PC-3 (cell line): ENCODE measurements at regions of chr3 and their contacts with region 1.

Region 1: DNA sequence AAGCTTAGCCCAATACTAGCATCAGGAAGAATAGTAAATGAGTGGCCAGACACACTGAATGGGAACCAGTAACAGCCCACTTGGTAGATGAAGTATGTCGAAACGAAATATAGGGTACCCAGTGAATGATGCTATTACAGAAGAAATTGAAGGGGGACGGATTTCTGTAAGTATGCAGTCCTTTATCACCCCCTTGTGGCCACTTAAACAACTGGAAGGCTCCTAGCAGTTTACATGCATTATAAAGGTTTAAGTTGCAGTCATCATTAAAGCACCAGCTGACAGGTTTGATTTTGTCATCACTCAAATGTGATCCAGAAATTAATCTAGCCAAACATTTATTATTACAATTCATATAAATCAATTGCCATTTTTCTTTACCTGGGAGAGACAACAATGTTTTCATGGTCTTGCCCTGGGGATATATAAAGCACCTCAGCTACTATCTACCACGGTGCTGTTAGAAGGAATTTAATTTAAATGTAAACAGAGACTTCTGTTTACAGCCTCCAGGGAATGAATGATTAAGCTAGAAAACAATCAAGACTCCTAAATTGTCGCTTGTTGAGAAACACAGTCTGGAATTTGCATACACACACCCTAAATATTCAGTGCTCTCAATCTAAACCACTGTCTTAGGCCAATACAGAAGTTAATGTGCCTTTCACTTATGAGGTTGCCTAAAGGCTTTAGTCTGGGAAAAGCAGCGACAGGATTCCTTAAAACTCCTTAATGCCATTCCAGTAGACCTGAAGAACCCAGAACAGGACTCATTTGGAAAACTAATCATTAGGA is 7.8 kb downstream of the EIF1B start:
- DNase-seq: peak; percentile 77
- ATAC-seq: peak; percentile 85
- H3K4me3 ChIP-seq: no peak overlapping the region
- H3K27ac ChIP-seq: no peak overlapping the region
- H3K4me1 ChIP-seq: no peaks in the 10 kb centered on the region
- H3K27me3 ChIP-seq: no peaks in the 10 kb centered on the region
- CTCF ChIP-seq: peak; percentile 89

Region 2: DNA sequence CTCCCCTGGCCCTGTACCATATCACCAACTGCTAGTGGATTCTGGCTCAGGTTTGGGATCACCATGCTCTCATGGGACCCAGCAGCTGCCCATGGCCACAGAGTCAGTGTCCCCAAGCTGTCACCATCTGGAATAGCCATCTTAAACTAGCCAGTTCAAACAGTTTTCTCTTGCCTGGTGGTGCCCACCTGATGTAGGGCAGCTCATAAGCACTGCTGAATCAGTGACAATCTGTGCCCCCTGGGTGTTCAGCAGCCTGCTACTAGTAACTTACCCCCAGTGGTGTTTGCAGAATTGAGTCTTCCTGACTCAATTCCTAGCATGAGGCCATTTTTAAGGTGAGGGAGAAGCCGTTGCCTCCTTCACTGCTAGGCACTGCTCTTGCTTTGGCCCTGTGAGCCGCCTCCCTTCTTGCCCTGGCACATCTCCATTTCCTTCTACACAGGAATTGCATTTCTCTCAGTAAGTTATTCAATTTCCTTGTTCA is 902.8 kb before region 1 on chr3:
- CTCF ChIA-PET with region 1: no interaction called
- POLR2A ChIA-PET with region 1: no interaction called
- intact Hi-C with region 1: loop called (anchors 10 kb)
- DNase-seq: no peak
- ATAC-seq: peak; percentile 16
- H3K4me3 ChIP-seq: no peak overlapping the region
- H3K27ac ChIP-seq: no peak overlapping the region
- H3K4me1 ChIP-seq: peaks cover 5% of the 10 kb centered on the region
- H3K27me3 ChIP-seq: no peaks in the 10 kb centered on the region
- CTCF ChIP-seq: no peak

Region 3: DNA sequence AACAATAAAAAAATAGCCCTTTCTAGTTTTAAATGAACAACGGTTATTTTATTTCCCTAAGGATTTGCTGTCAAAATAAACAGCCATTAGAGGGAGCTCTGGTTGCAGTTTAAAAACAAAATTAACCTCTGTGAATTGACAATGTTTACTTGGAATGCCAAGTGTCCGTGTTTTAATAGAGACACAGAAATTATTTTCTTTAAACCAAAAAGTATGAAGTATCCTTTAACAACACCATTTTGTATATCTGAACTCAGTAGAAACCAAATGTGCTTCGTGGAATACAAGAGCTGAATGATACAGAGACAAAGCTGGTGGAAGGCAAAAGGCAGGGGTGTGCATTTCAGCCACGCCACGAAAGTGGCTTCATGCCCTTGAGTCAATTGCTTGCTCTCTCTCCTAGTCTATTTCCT is 775.3 kb before region 1 on chr3:
- CTCF ChIA-PET with region 1: no interaction called
- POLR2A ChIA-PET with region 1: no interaction called
- intact Hi-C with region 1: loop called (anchors 5 kb)
- DNase-seq: peak; percentile 64
- ATAC-seq: peak; percentile 50
- H3K4me3 ChIP-seq: peak overlapping the region; percentile 36
- H3K27ac ChIP-seq: no peak overlapping the region
- H3K4me1 ChIP-seq: no peaks in the 10 kb centered on the region
- H3K27me3 ChIP-seq: no peaks in the 10 kb centered on the region
- CTCF ChIP-seq: peak; percentile 91

Region 4: DNA sequence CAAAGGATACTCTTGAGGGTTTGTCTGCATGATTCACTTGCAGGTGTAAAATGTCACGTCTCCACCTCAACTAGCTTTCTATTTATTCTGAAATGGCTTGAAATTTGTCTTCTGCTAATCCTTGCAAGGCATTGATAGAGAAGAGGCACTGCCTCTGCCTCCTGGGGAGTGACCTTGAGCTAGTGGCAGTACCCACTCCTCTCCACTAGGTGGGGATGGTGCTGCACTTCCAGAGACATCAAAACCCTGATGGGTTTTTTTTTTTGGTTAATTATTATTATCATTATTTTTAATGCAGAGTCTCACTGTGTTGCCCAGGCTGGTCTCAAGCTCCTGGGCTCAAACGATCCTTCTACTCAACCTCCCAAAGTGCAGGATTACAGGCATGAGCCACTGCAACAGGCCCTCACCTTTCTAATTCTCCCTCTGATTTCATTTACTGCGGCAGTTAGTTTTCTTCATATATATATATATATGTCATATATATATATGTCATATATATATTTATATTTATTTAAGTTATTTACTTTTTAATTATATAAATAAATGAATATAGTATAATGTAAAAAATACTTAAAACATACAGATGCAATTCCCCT is 125.3 kb before region 1 on chr3:
- CTCF ChIA-PET with region 1: interaction called, 10 read pairs
- POLR2A ChIA-PET with region 1: no interaction called
- intact Hi-C with region 1: loop called (anchors 1 kb)
- DNase-seq: peak; percentile 78
- ATAC-seq: peak; percentile 70
- H3K4me3 ChIP-seq: no peak overlapping the region
- H3K27ac ChIP-seq: no peak overlapping the region
- H3K4me1 ChIP-seq: no peaks in the 10 kb centered on the region
- H3K27me3 ChIP-seq: peaks cover 20% of the 10 kb centered on the region
- CTCF ChIP-seq: peak; percentile 83